PC-9 (cell line): ENCODE measurements at regions of chr22 and their contacts with region 1.

Region 1: DNA sequence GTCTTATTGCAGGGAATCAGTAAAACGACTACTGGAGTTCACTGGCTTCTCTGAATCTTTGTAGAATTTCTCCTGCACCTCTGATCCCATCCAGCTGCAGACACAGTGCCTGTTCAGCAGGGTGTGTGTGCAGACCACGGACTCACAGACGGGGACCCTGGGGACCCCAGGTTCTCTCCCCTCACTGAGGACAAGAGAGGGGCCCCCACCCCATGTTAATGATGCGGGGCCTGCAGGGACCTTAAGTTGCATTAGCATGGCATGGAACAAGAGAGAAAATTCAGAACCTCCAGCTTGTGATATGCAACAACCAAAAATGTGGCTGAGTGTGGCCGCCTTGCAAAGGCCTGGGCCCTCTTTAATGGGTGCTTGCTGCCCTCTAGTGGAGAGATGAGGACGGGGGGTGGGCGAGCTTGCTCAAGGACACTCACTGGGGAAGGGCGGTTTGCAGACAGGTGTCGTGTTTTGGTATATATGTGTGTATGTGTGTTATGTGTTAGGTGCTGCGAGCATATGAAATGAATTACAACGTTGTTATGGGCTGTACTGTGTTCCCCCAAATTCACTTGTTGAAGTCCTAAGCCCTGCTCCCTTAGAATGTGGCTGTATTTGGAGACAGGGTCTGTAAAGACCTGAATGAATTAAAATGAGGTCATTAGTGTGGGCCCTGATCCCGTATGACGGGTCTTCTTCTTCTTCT is 84.4 kb upstream of the SEPTIN5 start:
- DNase-seq: peak; percentile 36 to 66
- H3K4me3 ChIP-seq: no peak overlapping the region
- H3K27ac ChIP-seq: no peak overlapping the region
- H3K4me1 ChIP-seq: no peaks in the 10 kb centered on the region
- H3K27me3 ChIP-seq: no peaks in the 10 kb centered on the region
- CTCF ChIP-seq: peak; percentile 87

Region 2: GRCh38 chr22:18970176-18970947 is 659.5 kb before region 1 on chr22:
- CTCF ChIA-PET with region 1: no interaction called
- POLR2A ChIA-PET with region 1: no interaction called
- intact Hi-C with region 1: no loop called
- DNase-seq: no peak
- H3K4me3 ChIP-seq: peak overlapping the region; percentile 44; the same call in 1 of the 2 replicates
- H3K27ac ChIP-seq: no peak overlapping the region
- H3K4me1 ChIP-seq: no peaks in the 10 kb centered on the region
- H3K27me3 ChIP-seq: peaks cover 6% of the 10 kb centered on the region; the same call in 1 of the 2 replicates
- CTCF ChIP-seq: no peak

Region 3: GRCh38 chr22:19143967-19144400 is 485.9 kb before region 1 on chr22:
- CTCF ChIA-PET with region 1: interaction called, 3 read pairs
- POLR2A ChIA-PET with region 1: no interaction called
- intact Hi-C with region 1: loop called (anchors 1 kb)
- DNase-seq: no peak
- H3K4me3 ChIP-seq: peak overlapping the region; percentile 98
- H3K27ac ChIP-seq: no peak overlapping the region
- H3K4me1 ChIP-seq: peaks cover 5% of the 10 kb centered on the region; the same call in 1 of the 2 replicates
- H3K27me3 ChIP-seq: no peaks in the 10 kb centered on the region
- CTCF ChIP-seq: no peak

Region 4: GRCh38 chr22:19304547-19304946 is 325.3 kb before region 1 on chr22:
- CTCF ChIA-PET with region 1: interaction called, 4 read pairs
- POLR2A ChIA-PET with region 1: no interaction called
- intact Hi-C with region 1: loop called (anchors 5 kb)
- DNase-seq: no peak
- H3K4me3 ChIP-seq: no peak overlapping the region
- H3K27ac ChIP-seq: no peak overlapping the region
- H3K4me1 ChIP-seq: no peaks in the 10 kb centered on the region
- H3K27me3 ChIP-seq: no peaks in the 10 kb centered on the region
- CTCF ChIP-seq: no peak

Region 5: DNA sequence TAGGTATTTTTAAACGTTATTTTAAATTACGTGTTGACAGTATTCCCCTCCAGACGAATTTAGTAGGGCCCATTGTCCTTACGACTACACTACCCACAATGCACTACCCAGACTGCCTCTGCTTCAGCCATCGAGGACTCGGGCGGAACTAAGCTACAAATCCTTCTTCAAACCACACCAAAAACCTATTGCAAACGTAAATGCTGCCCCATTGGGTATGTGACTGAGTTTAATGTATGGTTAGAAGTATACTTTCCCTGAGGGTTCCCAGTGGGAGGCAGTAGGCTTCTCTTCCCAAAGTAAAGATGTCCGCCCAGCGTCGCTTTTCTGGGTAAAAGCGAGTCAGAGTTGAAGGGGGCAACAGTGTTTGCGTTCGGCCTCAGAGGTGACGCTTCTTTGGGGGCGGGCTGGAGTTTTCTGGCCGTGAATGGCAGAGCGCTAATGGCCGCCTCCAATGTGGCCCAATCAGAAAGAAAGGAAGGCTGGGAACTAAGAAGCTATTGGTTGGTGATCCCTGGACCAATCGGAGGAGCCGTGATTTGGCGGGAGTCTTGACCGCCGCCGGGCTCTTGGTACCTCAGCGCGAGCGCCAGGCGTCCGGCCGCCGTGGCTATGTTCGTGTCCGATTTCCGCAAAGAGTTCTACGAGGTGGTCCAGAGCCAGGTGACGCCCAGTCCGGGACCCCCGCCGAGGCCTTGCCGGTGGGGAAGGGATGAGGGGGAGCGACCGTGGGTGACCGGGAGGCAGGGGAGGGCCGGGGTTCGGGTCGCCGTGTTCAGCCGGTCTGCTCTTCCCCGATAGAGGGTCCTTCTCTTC is 150.3 kb before region 1 on chr22 and contains the start of gene CDC45:
- CTCF ChIA-PET with region 1: no interaction called
- POLR2A ChIA-PET with region 1: no interaction called
- intact Hi-C with region 1: loop called (anchors 5 kb)
- DNase-seq: peak; percentile 89 to 91
- H3K4me3 ChIP-seq: peak within 1 kb of the TSS; percentile 75
- H3K27ac ChIP-seq: peak within 1 kb of the TSS; percentile 92
- H3K4me1 ChIP-seq: peaks cover 15% of the 10 kb centered on the region
- H3K27me3 ChIP-seq: no peaks in the 10 kb centered on the region
- CTCF ChIP-seq: no peak
- total RNA-seq, gene CDC45: 27.5 and 29.1 TPM in 2 replicates

Region 6: GRCh38 chr22:19495562-19496323 is 134.1 kb before region 1 on chr22:
- CTCF ChIA-PET with region 1: no interaction called
- POLR2A ChIA-PET with region 1: no interaction called
- intact Hi-C with region 1: loop called (anchors 5 kb)
- DNase-seq: no peak
- H3K4me3 ChIP-seq: no peak overlapping the region
- H3K27ac ChIP-seq: no peak overlapping the region
- H3K4me1 ChIP-seq: no peaks in the 10 kb centered on the region
- H3K27me3 ChIP-seq: no peaks in the 10 kb centered on the region
- CTCF ChIP-seq: peak; percentile 21; the same call in 1 of the 2 replicates

Region 7: GRCh38 chr22:19641254-19641982 is 11.5 kb after region 1 on chr22:
- CTCF ChIA-PET with region 1: no interaction called
- POLR2A ChIA-PET with region 1: no interaction called
- intact Hi-C with region 1: no loop called
- DNase-seq: peak in 1 of 2 experiments; percentile 17
- H3K4me3 ChIP-seq: no peak overlapping the region
- H3K27ac ChIP-seq: no peak overlapping the region
- H3K4me1 ChIP-seq: no peaks in the 10 kb centered on the region
- H3K27me3 ChIP-seq: no peaks in the 10 kb centered on the region
- CTCF ChIP-seq: peak; percentile 39

Region 8: GRCh38 chr22:19717691-19718455 is 88.0 kb after region 1 on chr22:
- CTCF ChIA-PET with region 1: no interaction called
- POLR2A ChIA-PET with region 1: no interaction called
- intact Hi-C with region 1: loop called (anchors 2 kb)
- DNase-seq: peak in 1 of 2 experiments; percentile 76
- H3K4me3 ChIP-seq: peak overlapping the region; percentile 49; the same call in 1 of the 2 replicates
- H3K27ac ChIP-seq: no peak overlapping the region
- H3K4me1 ChIP-seq: no peaks in the 10 kb centered on the region
- H3K27me3 ChIP-seq: no peaks in the 10 kb centered on the region; the same call in 1 of the 2 replicates
- CTCF ChIP-seq: peak; percentile 55

Region 9: DNA sequence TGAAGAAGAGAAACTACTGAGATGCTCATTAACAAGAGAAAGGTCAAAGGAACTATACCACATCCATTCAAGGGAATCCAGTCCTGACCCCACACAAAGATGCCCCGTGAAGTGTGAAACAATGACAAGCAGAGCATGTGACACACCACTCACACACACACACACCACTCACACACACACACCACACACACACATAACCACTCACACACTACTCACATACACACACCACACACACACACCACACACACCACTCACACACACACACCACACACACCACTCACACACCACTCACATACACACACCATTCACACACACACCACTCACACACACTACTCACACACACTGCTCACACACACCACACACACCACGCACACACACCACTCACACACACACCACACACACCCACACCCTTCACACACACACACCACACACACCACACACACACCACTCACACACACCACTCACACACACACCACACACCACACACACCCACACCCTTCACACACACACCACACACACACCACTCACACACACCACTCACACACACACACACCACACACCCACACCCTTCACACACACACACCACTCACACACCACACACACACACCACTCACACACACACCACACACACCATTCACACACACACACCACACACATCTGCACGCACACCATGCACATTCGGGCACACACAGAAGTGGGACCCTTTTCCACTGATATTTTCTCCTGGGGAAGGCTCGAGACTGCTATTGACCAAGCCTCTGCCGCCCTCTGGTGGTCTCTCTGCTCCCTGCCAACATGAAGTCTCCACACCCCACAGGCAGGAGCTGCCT is 279.7 kb after region 1 on chr22:
- CTCF ChIA-PET with region 1: no interaction called
- POLR2A ChIA-PET with region 1: no interaction called
- intact Hi-C with region 1: loop called (anchors 5 kb)
- DNase-seq: peak in 1 of 2 experiments; percentile 66
- H3K4me3 ChIP-seq: no peak overlapping the region
- H3K27ac ChIP-seq: no peak overlapping the region
- H3K4me1 ChIP-seq: no peaks in the 10 kb centered on the region
- H3K27me3 ChIP-seq: no peaks in the 10 kb centered on the region
- CTCF ChIP-seq: peak; percentile 86